Heart right ventricle (tissue), 16 donors: ENCODE measurements at regions of chr1 and their contacts with region 1.

Region 1: DNA sequence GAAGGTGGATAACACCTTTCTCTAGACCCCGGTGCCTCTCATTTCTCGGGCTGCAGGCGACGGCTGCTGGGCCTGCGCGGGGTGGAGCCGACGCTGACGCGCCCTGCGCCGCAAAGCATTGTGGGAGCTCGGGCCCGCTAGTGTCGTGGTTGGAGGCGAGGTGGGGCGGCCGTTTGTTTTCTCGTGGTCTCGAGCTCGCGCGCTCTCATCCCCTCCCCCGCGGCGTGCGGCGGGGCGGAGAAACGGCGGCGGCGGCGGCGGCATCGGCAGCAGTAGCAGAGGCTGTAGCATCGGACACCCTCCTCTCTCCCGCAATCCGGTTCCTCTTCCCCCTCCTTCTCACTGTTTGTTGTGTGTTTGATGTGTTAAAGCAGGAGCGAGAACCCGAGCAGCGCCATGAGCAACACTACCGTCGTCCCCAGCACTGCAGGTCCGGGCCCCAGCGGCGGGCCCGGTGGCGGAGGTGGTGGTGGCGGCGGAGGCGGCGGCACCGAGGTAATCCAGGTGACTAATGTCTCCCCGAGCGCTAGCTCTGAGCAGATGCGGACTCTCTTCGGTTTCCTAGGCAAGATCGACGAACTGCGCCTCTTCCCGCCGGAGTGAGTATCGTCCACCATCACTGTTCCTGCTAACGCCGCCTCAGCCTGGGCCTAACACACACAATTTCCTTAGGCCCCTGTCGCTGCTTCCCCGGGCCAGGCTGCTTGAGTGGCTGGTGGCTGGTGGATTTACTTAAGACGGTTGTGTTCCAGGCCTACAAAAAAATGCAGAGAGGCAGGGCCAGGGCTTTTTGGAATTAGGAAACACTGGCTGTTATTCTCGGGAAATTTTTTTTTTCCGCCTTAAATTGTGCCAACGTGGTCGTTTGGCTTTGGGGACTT is at the start of gene SRSF11:
- DNase-seq: peak; percentile 97 to 98
- ATAC-seq: peak; percentile 100
- H3K4me3 ChIP-seq: peak within 1 kb of the TSS; percentile 47 to 89 (median 81)
- H3K27ac ChIP-seq: peak within 1 kb of the TSS; percentile 78 to 96 (median 94)
- H3K4me1 ChIP-seq: peaks cover 2 to 56% (median 48%) of the 10 kb centered on the region in 9 donors
- H3K27me3 ChIP-seq: no peaks in the 10 kb centered on the region
- CTCF ChIP-seq: peak in 4 of 9 donors; percentile 15 to 33 (median 22)
- total RNA-seq, gene SRSF11: 41.8 to 64.1 (median 52.8) TPM

Region 2: GRCh38 chr1:69993787-69994186 is 227.7 kb before region 1 on chr1:
- intact Hi-C with region 1: no loop called
- DNase-seq: no peak
- ATAC-seq: no peak
- H3K4me3 ChIP-seq: no peak overlapping the region
- H3K27ac ChIP-seq: no peak overlapping the region
- H3K4me1 ChIP-seq: no peaks in the 10 kb centered on the region
- H3K27me3 ChIP-seq: no peaks in the 10 kb centered on the region
- CTCF ChIP-seq: no peak

Region 3: GRCh38 chr1:70017770-70018169 is 203.7 kb before region 1 on chr1:
- intact Hi-C with region 1: no loop called
- DNase-seq: no peak
- ATAC-seq: no peak
- H3K4me3 ChIP-seq: no peak overlapping the region
- H3K27ac ChIP-seq: no peak overlapping the region
- H3K4me1 ChIP-seq: no peaks in the 10 kb centered on the region
- H3K27me3 ChIP-seq: no peaks in the 10 kb centered on the region
- CTCF ChIP-seq: no peak

Region 4: GRCh38 chr1:70205434-70206118 is 15.9 kb before region 1 on chr1 and contains the start of gene LRRC40:
- intact Hi-C with region 1: loop called in 1 of 10 experiments (anchors 1 kb)
- DNase-seq: peak; percentile 96
- ATAC-seq: peak; percentile 99 to 100 (median 99)
- H3K4me3 ChIP-seq: peak within 1 kb of the TSS; percentile 57 to 100 (median 78)
- H3K27ac ChIP-seq: peak within 1 kb of the TSS; percentile 73 to 97 (median 91)
- H3K4me1 ChIP-seq: peaks cover 0 to 70% (median 52%) of the 10 kb centered on the region in 9 donors
- H3K27me3 ChIP-seq: no peaks in the 10 kb centered on the region
- CTCF ChIP-seq: no peak
- total RNA-seq, gene LRRC40: 10.0 to 12.2 (median 11.2) TPM

Region 5: DNA sequence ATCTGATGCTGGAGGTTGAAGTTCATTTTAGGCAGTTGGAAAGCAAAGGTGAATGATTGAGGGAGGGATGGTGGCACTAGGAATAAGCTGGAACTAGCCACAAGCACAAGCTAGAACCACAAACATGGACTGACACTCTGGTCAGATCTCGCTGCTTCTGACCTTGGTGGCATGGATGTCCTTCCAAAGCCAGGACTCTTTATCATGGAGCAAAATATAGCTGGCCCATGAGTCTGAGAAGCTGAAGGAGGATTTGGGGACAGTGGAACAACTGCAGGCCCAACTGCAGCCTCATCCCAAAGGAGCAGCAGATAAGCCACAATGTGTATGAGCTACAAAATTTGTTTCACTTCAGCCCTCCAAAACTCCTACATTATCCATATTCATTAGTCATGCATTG is 35.2 kb after region 1 on chr1:
- intact Hi-C with region 1: loop called in 1 of 10 experiments (anchors 5 kb)
- DNase-seq: no peak
- ATAC-seq: peak in 6 of 8 donors; percentile 38 to 78 (median 68)
- H3K4me3 ChIP-seq: no peak overlapping the region
- H3K27ac ChIP-seq: peak overlapping the region in 3 of 10 donors; percentile 22 to 34 (median 23)
- H3K4me1 ChIP-seq: peaks cover 0 to 5% (median 0%) of the 10 kb centered on the region in 9 donors
- H3K27me3 ChIP-seq: no peaks in the 10 kb centered on the region
- CTCF ChIP-seq: no peak

Region 6: DNA sequence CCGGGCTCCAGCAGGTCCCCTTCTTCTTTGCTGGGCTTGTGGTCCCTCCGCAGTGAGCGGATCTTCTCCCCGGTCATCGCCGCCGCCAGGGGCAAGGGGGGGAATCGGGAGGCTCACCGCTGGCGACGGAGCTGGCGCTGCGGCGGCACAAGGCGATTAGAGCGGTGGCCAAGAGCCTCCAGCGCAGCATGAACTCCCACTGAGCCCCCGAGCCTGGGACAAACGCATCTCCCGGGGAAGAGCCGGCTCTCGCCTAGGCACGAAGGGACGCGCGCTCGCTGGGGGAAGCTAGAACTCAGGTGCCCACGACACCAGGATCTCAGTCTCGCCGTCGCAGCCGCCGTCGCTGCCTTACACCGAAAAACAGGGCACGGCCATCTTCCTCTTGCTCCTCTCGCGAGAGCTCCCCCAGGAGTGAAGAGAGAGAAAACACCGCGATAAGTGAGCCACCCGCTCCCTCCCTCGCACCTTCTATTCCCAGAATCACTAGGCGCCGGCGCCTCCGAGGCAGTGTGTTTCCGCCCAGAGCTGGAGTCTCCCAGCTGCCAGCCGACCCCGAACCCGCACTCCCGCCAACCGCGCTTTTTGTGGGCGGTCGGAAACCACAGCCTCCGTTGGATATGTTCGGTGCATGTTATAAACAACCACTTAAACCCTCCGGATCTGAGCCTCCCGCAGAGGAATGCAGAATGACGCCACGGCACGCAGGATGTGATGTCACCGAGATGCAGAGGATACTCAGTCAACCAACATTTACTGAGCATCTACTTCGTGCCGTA is 133.0 kb after region 1 on chr1 and contains the start of gene ANKRD13C:
- intact Hi-C with region 1: loop called in 3 of 10 experiments (anchors 10 kb)
- DNase-seq: peak; percentile 89 to 96
- ATAC-seq: peak; percentile 98 to 99 (median 99)
- H3K4me3 ChIP-seq: peak within 1 kb of the TSS; percentile 67 to 94 (median 86)
- H3K27ac ChIP-seq: peak within 1 kb of the TSS; percentile 56 to 95 (median 90)
- H3K4me1 ChIP-seq: peaks cover 0 to 58% (median 38%) of the 10 kb centered on the region in 9 donors
- H3K27me3 ChIP-seq: no peaks in the 10 kb centered on the region
- CTCF ChIP-seq: peak in 1 of 9 donors; percentile 15
- total RNA-seq, gene ANKRD13C: 8.4 to 12.5 (median 10.1) TPM

Region 7: GRCh38 chr1:71068325-71069240 is 847.1 kb after region 1 on chr1:
- intact Hi-C with region 1: loop called in 1 of 10 experiments (anchors 10 kb)
- DNase-seq: no peak
- ATAC-seq: no peak
- H3K4me3 ChIP-seq: no peak overlapping the region
- H3K27ac ChIP-seq: no peak overlapping the region
- H3K4me1 ChIP-seq: peaks cover 0 to 7% (median 0%) of the 10 kb centered on the region in 9 donors
- H3K27me3 ChIP-seq: no peaks in the 10 kb centered on the region
- CTCF ChIP-seq: no peak